IMR-90 (cell line): ENCODE measurements at regions of chr4 and their contacts with region 1.

Region 1: DNA sequence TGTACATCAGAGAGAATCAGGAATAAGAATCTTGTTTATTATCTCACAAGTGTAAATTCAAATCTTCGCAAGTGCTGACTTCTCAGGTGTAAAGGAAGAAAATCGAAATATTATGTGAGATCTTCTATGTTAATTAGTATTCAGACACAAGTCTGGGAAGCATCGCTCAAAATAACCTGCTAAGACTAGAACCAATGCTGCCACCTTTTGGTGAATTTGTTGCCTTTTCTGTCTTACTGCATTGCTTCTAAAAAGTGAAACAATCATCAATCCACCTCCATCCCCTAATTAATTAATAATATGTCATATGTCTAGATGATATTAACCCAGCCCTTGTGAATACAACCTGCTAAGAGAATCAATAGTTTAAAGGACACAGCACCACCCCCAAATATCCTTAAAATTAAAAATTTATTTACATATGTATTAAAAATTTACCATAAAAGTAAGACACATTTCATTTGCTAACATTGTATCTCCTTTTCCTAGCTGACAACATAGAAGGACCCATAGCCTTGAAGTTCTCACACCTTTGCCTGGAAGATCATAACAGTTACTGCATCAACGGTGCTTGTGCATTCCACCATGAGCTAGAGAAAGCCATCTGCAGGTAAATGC is 3.5 kb downstream of the EPGN start:
- DNase-seq: peak; percentile 62
- ATAC-seq: peak; percentile 69; the same call in 1 of the 2 replicates
- H3K4me3 ChIP-seq: no peak overlapping the region
- H3K27ac ChIP-seq: no peak overlapping the region
- H3K4me1 ChIP-seq: no peaks in the 10 kb centered on the region
- H3K27me3 ChIP-seq: no peaks in the 10 kb centered on the region; the same call in 1 of the 2 replicates
- CTCF ChIP-seq: peak; percentile 77
- POLR2A ChIP-seq: no peak
- RAD21 ChIP-seq: peak; percentile 81

Region 2: DNA sequence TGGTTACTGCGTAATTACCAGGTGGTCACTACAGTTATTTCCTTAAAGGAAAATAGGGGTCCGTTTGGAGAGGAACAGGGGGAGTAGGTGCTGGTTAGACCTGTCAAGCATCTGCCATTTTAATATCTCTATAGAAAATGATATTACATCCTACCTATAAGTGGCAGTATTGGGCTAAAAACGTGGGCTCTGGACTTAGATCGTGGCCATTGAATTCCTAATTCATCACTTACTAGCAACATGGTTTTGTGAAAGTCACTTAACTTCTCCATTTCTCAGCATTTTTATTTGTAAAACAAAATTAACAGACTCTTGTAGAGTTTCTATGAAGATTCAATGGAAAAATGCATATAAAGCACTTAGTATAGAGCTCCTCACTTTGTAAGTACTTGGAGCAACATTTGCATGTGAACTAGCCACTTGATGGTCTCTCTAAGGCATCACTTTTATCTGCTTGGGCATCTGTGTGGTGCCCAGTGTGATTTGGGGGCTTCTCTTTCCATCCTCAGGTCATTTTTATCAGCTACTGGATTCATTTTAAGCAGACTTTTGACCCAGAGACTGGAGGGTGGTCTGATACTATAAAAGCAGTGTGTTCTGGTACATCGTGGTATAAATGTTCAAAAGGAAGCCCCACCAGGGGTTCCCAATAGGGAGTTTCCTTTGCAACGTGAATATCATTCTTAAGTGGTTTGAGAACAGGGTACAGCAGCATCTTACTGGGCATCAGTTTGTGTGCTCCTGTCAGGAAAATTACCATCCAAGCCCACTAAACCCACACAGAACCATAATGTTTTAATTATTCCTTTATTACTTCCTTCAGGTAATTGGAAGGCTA is 648.9 kb before region 1 on chr4:
- CTCF ChIA-PET with region 1: no interaction called
- POLR2A ChIA-PET with region 1: no interaction called
- dilution Hi-C with region 1: no loop called
- in situ Hi-C with region 1: loop called (anchors 25 kb)
- intact Hi-C with region 1: loop called (anchors 5 kb)
- DNase-seq: peak; percentile 77
- ATAC-seq: peak; percentile 64
- H3K4me3 ChIP-seq: no peak overlapping the region
- H3K27ac ChIP-seq: no peak overlapping the region; the same call in 1 of the 2 replicates
- H3K4me1 ChIP-seq: peaks cover 6% of the 10 kb centered on the region
- H3K27me3 ChIP-seq: no peaks in the 10 kb centered on the region
- CTCF ChIP-seq: peak; percentile 72
- POLR2A ChIP-seq: no peak
- RAD21 ChIP-seq: peak; percentile 87

Region 3: GRCh38 chr4:74174941-74175340 is 136.9 kb before region 1 on chr4:
- CTCF ChIA-PET with region 1: no interaction called
- POLR2A ChIA-PET with region 1: no interaction called
- dilution Hi-C with region 1: no loop called
- in situ Hi-C with region 1: loop called (anchors 5 kb)
- intact Hi-C with region 1: no loop called
- DNase-seq: no peak
- ATAC-seq: no peak
- H3K4me3 ChIP-seq: no peak overlapping the region
- H3K27ac ChIP-seq: no peak overlapping the region
- H3K4me1 ChIP-seq: no peaks in the 10 kb centered on the region
- H3K27me3 ChIP-seq: no peaks in the 10 kb centered on the region
- CTCF ChIP-seq: no peak
- POLR2A ChIP-seq: no peak
- RAD21 ChIP-seq: no peak

Region 4: DNA sequence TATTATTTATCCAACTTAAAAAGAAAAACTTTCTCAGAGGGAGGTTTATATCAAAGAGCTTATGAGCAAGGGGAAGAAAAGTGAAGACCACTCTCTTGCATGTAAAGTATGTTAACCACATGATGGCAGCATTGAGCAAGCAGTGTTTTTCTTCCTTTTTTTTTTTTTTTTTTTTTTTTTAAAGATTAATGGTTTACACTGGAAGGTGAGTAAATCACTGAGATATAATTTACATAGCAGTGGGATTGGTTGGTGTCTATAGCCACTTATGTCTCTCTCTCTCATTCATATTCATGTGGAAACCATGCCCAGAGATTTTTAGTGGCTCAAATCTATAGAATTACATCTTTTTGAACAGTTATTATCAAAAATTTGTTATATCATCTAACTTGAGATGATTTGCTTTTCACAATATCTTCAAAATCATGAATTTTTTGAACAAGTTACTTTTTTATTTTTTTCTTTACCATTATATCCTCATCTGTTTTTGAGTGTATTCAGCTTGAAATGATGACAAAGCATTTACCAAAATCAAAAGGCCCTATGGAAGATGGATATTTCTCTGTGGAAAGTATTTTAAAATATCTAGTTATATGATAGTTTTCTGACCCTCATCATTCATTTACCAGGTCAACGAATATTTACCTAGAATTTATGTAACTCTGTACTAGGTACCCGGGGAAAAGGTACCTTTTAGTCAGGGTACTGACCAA is 122.3 kb before region 1 on chr4:
- CTCF ChIA-PET with region 1: interaction called, 6 read pairs
- POLR2A ChIA-PET with region 1: no interaction called
- dilution Hi-C with region 1: no loop called
- in situ Hi-C with region 1: no loop called
- intact Hi-C with region 1: loop called (anchors 1 kb)
- DNase-seq: peak; percentile 55
- ATAC-seq: peak; percentile 40; the same call in 1 of the 2 replicates
- H3K4me3 ChIP-seq: no peak overlapping the region
- H3K27ac ChIP-seq: no peak overlapping the region
- H3K4me1 ChIP-seq: no peaks in the 10 kb centered on the region
- H3K27me3 ChIP-seq: no peaks in the 10 kb centered on the region
- CTCF ChIP-seq: peak; percentile 71
- POLR2A ChIP-seq: no peak
- RAD21 ChIP-seq: peak; percentile 74

Region 5: DNA sequence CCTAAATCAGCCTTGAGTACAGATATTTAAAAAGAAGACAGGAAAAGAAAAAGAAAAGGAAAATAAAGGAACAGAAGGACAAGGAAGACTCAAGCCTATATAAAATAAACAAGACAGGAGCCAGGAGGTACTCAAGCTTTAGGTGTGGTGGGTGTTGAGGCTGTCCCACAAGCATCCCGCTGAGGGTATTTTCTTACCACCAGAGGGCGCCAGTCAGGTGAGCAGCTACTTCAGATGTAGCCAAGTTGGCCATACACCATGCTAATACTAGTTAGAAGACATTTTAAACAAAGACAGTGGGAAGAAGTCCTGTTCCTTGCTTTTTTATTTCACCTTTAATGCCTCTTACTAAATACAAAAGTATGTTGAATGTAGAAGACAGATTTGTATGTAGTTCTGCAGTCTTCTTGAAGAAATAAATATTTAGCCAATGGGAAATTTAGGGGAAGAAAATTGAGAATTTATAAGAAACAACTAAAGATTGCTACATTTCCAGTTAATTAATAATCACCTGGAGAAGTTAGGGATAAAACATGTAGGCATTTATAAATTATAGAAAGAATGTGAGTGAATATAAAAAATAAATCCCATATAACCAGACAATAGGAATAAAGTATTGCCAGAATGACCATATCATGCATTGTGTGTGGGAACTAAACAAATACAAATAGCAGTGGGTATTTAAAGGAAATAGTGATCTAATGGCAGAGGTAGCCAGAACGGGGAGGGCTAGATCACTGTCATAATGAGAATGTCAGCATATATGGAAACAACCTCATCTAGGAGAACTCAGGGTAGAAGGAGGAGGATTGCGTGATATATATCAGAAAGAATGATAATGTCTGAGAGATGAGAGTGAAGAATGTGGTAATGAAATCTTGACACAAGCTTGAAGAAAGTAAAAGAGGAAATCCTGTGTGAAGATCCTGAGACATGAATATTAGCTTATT is 82.8 kb before region 1 on chr4:
- CTCF ChIA-PET with region 1: interaction called, 6 read pairs
- POLR2A ChIA-PET with region 1: no interaction called
- dilution Hi-C with region 1: no loop called
- in situ Hi-C with region 1: no loop called
- intact Hi-C with region 1: loop called (anchors 1 kb)
- DNase-seq: peak; percentile 67
- ATAC-seq: peak; percentile 52; the same call in 1 of the 2 replicates
- H3K4me3 ChIP-seq: no peak overlapping the region
- H3K27ac ChIP-seq: no peak overlapping the region
- H3K4me1 ChIP-seq: peaks cover 6% of the 10 kb centered on the region; the same call in 1 of the 2 replicates
- H3K27me3 ChIP-seq: no peaks in the 10 kb centered on the region
- CTCF ChIP-seq: peak; percentile 65
- POLR2A ChIP-seq: no peak
- RAD21 ChIP-seq: peak; percentile 54

Region 6: DNA sequence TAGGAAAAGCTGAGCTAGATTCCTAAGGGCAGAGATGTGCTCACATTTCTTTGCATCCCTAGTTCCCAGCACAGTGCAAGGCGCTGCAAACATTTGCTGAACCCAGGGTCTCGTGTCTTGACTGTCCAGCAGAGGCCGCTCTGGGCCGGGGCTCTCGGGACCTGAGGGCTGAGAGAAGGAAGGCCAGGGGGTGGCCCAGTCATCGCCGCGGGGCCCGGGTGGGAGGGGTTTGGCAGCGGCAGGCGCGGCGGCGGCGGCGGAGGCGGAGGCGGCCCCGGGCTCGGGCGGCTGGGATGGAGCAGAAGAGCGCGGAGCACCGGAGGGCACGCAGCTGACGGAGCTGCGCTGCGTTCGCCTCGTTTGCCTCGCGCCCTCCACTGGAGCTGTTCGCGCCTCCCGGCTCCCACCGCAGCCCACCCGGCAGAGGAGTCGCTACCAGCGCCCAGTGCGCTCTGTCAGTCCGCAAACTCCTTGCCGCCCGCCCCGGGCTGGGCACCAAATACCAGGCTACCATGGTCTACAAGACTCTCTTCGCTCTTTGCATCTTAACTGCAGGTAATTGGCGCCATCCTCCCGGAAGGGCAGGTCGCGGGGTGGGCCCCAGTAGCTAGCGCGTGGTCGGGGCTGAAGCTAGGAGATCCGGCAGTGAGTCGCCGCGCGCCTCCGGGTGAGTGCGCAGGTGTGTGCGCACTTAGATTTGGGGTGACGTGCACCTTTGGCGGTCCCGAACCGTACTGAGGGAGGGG is 621.2 kb after region 1 on chr4 and contains the start of gene PARM1:
- CTCF ChIA-PET with region 1: no interaction called
- POLR2A ChIA-PET with region 1: no interaction called
- dilution Hi-C with region 1: no loop called
- in situ Hi-C with region 1: no loop called
- intact Hi-C with region 1: no loop called
- DNase-seq: peak; percentile 61
- ATAC-seq: peak; percentile 98
- H3K4me3 ChIP-seq: peak within 1 kb of the TSS; percentile 40
- H3K27ac ChIP-seq: no peak within 1 kb of the TSS
- H3K4me1 ChIP-seq: no peaks in the 10 kb centered on the region
- H3K27me3 ChIP-seq: peaks cover 41% of the 10 kb centered on the region
- CTCF ChIP-seq: peak; percentile 68
- POLR2A ChIP-seq: no peak
- RAD21 ChIP-seq: peak; percentile 73
- total RNA-seq, gene PARM1: under 0.01 and 0.18 TPM in 2 replicates